OCI-LY7 (cell line): ENCODE measurements at regions of chr10 and their contacts with region 1.

Region 1: DNA sequence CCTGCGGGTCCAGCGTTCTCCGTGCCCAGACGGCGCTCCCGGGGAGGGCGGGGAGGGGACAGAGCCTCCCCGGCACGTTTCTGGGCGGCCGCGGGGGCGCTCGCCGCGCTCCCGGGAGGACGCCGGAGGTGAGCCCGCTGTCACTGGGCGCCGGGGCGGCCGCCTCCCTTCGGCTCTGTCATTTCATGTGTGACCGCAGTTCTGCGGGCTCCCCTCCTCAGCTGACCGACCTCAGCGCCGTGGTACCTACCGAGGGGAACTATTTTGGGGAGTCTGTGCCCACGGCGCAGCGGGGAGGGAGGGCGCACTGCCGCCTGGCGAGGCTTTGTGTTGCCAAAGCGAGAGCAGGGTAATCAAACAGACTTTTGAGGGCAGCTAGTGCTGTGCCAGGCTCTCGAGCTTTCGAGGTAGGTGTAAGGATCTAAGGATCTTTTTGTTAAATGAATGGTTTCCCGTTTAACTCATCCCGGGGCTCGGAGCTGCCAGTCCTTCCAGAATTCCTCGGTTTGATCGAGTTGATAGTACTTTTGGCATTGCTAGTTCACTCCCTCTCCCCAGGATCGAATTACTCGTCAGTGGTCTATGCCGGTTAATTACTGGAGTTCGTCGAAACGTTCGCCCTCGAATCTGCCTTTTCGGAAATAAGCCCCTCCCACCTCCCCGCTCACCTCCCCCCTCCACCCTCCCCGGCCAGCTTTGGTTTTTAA is 1.9 kb downstream of the ARID5B start:
- DNase-seq: peak; percentile 77
- H3K4me3 ChIP-seq: peak overlapping the region; percentile 93
- H3K27ac ChIP-seq: peak overlapping the region; percentile 96
- H3K4me1 ChIP-seq: peaks cover 50% of the 10 kb centered on the region
- CTCF ChIP-seq: peak; percentile 59

Region 2: DNA sequence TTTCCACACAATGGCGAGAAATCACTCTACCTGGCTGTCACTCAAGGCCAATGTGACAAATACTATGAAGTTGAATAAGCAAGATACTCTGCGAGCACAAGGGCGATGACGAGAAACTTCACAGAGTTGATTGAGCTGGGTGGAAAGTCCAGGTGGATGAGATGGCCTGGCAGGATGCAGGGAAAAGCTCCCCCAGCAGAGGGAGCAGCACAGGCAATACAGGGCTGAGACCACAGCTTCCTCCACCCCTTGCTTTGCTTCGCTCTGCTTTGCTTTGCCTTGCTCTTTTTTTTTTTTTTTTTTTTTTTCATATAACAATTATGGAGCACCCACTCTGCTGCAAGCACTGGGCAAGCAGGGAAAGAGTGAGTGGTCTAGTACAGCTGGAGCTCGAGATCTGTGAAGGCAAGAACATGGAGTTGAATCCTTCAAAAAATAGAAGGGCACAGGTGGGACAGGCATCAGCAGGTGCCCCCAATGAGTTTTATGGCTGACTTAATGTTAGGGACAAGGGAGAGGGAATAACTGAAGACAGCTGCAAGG is 152.4 kb before region 1 on chr10:
- CTCF ChIA-PET with region 1: no interaction called
- POLR2A ChIA-PET with region 1: no interaction called
- intact Hi-C with region 1: loop called (anchors 5 kb)
- DNase-seq: peak; percentile 81
- H3K4me3 ChIP-seq: no peak overlapping the region
- H3K27ac ChIP-seq: no peak overlapping the region
- H3K4me1 ChIP-seq: peaks cover 22% of the 10 kb centered on the region
- CTCF ChIP-seq: peak; percentile 86

Region 3: GRCh38 chr10:61992671-61993668 is 89.6 kb after region 1 on chr10:
- CTCF ChIA-PET with region 1: interaction called, 3 read pairs
- POLR2A ChIA-PET with region 1: interaction called, 171 read pairs
- intact Hi-C with region 1: loop called (anchors 1 kb)
- DNase-seq: peak; percentile 67
- H3K4me3 ChIP-seq: peak overlapping the region; percentile 58
- H3K27ac ChIP-seq: peak overlapping the region; percentile 80
- H3K4me1 ChIP-seq: peaks cover 100% of the 10 kb centered on the region
- CTCF ChIP-seq: no peak

Region 4: DNA sequence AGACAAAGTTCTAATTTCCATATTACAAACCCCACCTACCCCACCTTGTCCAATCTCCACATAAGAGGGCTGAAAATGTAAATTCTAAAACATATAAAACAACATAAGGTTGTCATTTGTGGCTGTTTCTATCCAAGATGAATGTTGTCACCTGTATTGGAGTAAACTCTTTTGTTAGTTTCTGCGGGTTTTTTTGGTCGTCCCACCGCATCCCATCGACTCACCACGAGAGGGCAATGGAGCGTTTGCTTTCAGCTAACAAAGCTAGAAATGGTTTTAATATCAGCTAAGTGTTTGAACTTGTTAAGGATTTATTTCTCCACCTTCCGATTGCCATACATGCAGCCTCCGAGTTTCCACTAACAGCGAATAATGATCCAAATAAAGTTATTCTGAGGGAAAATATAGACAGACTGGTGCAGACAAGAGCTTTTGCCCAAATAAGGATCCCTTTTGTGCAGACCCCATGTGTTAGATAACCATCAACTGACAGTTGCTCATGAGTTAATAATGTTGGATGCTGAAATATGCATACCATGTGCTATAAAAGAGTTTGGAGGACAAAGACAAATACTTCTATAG is 135.3 kb after region 1 on chr10:
- CTCF ChIA-PET with region 1: no interaction called
- POLR2A ChIA-PET with region 1: interaction called, 277 read pairs
- intact Hi-C with region 1: no loop called
- DNase-seq: peak; percentile 85
- H3K4me3 ChIP-seq: peak overlapping the region; percentile 18
- H3K27ac ChIP-seq: peak overlapping the region; percentile 56
- H3K4me1 ChIP-seq: peaks cover 80% of the 10 kb centered on the region
- CTCF ChIP-seq: peak; percentile 98

Region 5: DNA sequence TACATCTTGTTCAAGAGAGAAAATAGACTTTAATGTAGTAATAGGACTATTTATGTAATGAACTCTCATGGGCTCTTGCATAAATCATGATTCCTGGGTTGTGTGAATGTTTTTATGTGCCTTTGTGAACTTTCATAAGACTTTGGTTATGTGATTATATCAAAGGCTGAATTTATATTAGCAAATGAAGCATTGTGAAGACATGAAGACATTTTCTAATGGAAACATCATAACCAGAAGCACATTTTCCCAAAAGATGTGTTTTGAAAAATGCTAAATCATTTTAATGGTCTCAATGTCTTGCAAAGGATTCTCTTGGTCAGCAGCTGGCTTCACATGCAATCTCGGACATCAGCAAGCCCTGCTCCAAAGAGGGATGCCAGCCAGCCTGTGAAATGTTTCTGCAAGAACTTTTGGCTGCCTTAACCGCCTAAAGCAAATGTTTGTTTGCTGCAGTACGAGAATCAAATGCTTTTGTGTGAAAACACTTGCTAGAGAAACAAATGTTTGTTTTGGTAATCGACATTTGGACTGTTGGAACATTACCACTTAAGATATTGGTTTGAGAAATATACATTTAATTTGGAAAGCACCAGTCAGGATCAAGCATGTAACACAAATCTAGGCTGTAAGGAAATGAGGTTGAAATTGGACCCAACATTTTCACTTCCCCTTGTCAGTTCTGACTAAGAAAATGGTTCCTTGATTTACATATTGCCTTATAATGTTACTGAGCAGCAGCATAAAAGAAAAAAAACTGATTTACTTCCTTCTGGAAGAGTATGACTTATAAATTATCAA is 263.2 kb after region 1 on chr10:
- CTCF ChIA-PET with region 1: no interaction called
- POLR2A ChIA-PET with region 1: no interaction called
- intact Hi-C with region 1: loop called (anchors 5 kb)
- DNase-seq: peak; percentile 76
- H3K4me3 ChIP-seq: peak overlapping the region; percentile 32
- H3K27ac ChIP-seq: peak overlapping the region; percentile 57
- H3K4me1 ChIP-seq: peaks cover 26% of the 10 kb centered on the region
- CTCF ChIP-seq: no peak

Region 6: GRCh38 chr10:62456611-62457101 is 553.3 kb after region 1 on chr10:
- CTCF ChIA-PET with region 1: no interaction called
- POLR2A ChIA-PET with region 1: interaction called, 3 read pairs
- intact Hi-C with region 1: loop called (anchors 5 kb)
- DNase-seq: peak; percentile 97
- H3K4me3 ChIP-seq: peak overlapping the region; percentile 14
- H3K27ac ChIP-seq: peak overlapping the region; percentile 80
- H3K4me1 ChIP-seq: peaks cover 49% of the 10 kb centered on the region
- CTCF ChIP-seq: no peak

Region 7: GRCh38 chr10:63133056-63133820 is 1229.9 kb after region 1 on chr10 and contains the start of gene NRBF2:
- CTCF ChIA-PET with region 1: no interaction called
- POLR2A ChIA-PET with region 1: no interaction called
- intact Hi-C with region 1: loop called (anchors 5 kb)
- DNase-seq: peak; percentile 99
- H3K4me3 ChIP-seq: peak within 1 kb of the TSS; percentile 88
- H3K27ac ChIP-seq: peak within 1 kb of the TSS; percentile 72
- H3K4me1 ChIP-seq: peaks cover 22% of the 10 kb centered on the region
- CTCF ChIP-seq: peak; percentile 64
- total RNA-seq, gene NRBF2: 14.1 and 14.2 TPM in 2 replicates